MCF 10A (cell line): ENCODE measurements at regions of chr1 and their contacts with region 1.

Region 1: GRCh38 chr1:177948336-177948972 is 21.4 kb downstream of the SEC16B start:
- DNase-seq: peak; percentile 86
- H3K4me3 Mint-ChIP-seq: no peak overlapping the region
- H3K27ac Mint-ChIP-seq: no peak overlapping the region
- H3K4me1 Mint-ChIP-seq: peaks cover 6% of the 10 kb centered on the region
- H3K27me3 Mint-ChIP-seq: no peaks in the 10 kb centered on the region
- CTCF ChIP-seq: peak; percentile 97

Region 2: DNA sequence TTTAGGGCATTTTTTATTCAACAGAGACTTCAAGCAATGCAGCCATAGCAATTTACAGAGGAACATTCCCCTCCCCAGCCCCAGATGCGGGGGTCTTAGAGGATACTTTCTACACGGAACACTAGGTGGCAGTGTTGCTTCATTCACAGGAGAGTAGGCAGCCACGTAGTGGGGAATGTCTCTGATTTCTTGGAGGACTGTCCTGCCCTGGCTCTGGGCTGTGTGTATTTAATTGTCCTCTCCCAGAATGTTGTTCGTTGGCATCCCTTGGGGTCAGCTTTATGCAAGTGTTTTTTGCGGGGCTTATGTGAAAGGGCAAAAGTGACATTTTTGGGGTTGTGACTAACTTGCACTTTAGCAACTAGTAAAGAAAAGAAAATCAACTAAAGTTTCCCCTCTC is 1388.6 kb before region 1 on chr1:
- CTCF ChIA-PET with region 1: interaction called, 19 read pairs
- POLR2A ChIA-PET with region 1: no interaction called
- intact Hi-C with region 1: loop called (anchors 10 kb)
- DNase-seq: peak; percentile 83
- H3K4me3 Mint-ChIP-seq: no peak overlapping the region
- H3K27ac Mint-ChIP-seq: no peak overlapping the region
- H3K4me1 Mint-ChIP-seq: no peaks in the 10 kb centered on the region
- H3K27me3 Mint-ChIP-seq: peaks cover 31% of the 10 kb centered on the region
- CTCF ChIP-seq: peak; percentile 99

Region 3: DNA sequence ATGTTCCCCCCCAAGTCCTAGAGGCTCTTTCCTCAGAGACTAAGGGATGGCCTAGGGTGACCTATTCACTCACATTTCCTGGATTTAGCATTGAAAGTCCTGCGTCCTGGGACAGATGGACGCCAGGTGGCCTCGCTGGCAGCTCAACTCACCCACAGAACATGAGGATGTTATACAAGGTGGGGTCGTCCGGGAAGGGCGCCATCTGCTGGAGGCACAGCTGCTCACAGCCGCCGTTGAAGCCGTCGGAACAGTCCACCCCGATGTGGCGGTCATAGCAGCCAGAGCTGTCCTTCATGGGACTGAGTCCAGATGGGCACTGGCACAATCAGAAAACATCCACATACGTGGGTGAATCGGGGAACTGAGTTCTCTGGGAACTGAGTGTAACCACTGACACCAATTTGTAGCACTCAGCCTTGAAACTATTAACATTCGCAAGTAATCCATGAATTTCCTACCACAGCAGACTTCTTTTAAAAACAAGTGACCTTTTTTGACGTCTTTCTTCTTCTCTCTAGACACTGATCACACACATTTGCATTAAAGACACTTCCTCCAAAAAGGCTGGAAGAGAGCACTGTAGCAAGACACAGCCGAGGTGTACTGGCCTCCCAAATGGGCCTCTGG is 999.3 kb before region 1 on chr1:
- CTCF ChIA-PET with region 1: interaction called, 4 read pairs
- POLR2A ChIA-PET with region 1: no interaction called
- intact Hi-C with region 1: loop called (anchors 1 kb)
- DNase-seq: peak; percentile 65
- H3K4me3 Mint-ChIP-seq: no peak overlapping the region
- H3K27ac Mint-ChIP-seq: no peak overlapping the region
- H3K4me1 Mint-ChIP-seq: no peaks in the 10 kb centered on the region
- H3K27me3 Mint-ChIP-seq: no peaks in the 10 kb centered on the region
- CTCF ChIP-seq: peak; percentile 77

Region 4: GRCh38 chr1:177429263-177429662 is 519.2 kb before region 1 on chr1:
- CTCF ChIA-PET with region 1: interaction called, 11 read pairs
- POLR2A ChIA-PET with region 1: no interaction called
- intact Hi-C with region 1: loop called (anchors 1 kb)
- DNase-seq: peak; percentile 16
- H3K4me3 Mint-ChIP-seq: no peak overlapping the region
- H3K27ac Mint-ChIP-seq: no peak overlapping the region
- H3K4me1 Mint-ChIP-seq: no peaks in the 10 kb centered on the region
- H3K27me3 Mint-ChIP-seq: peaks cover 16% of the 10 kb centered on the region
- CTCF ChIP-seq: no peak

Region 5: DNA sequence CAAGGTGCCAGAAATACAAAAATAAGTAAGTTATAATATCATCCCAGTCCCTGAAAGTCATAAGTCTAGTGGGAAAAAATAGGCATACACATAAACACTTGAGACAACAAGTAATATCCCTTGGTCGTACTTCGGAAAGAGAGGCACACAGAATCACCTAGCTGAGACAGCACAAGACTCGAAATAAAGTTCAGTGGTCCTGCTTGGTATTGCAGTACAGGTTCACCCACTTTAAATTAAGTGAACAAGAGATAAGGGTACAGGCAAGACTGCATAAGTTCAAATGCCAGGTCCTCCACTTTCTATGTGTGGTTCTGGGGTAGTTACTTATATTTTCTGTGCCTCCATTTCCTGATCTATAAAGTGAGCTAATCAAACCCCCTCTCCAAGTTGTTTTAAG is 26.2 kb before region 1 on chr1:
- CTCF ChIA-PET with region 1: interaction called, 18 read pairs
- POLR2A ChIA-PET with region 1: no interaction called
- intact Hi-C with region 1: no loop called
- DNase-seq: no peak
- H3K4me3 Mint-ChIP-seq: no peak overlapping the region
- H3K27ac Mint-ChIP-seq: no peak overlapping the region
- H3K4me1 Mint-ChIP-seq: peaks cover 8% of the 10 kb centered on the region
- H3K27me3 Mint-ChIP-seq: no peaks in the 10 kb centered on the region
- CTCF ChIP-seq: no peak

Region 6: GRCh38 chr1:177975588-177976495 is 27.4 kb after region 1 on chr1:
- CTCF ChIA-PET with region 1: interaction called, 13 read pairs
- POLR2A ChIA-PET with region 1: no interaction called
- intact Hi-C with region 1: no loop called
- DNase-seq: peak; percentile 47
- H3K4me3 Mint-ChIP-seq: no peak overlapping the region
- H3K27ac Mint-ChIP-seq: no peak overlapping the region
- H3K4me1 Mint-ChIP-seq: peaks cover 6% of the 10 kb centered on the region
- H3K27me3 Mint-ChIP-seq: no peaks in the 10 kb centered on the region
- CTCF ChIP-seq: no peak